ENCODE measurements at regions of chr14 and their contacts with region 1.

Region 1: GRCh38 chr14:84482256-84483066 is 1047.5 kb upstream of the FLRT2 start:
- DNase-seq: peak; percentile 71
- H3K4me3 ChIP-seq: peak overlapping the region in 1 of 3 experiments; percentile 4
- H3K27ac ChIP-seq: peak overlapping the region; percentile 78
- H3K4me1 ChIP-seq: peaks cover 33% of the 10 kb centered on the region
- H3K27me3 ChIP-seq: no peaks in the 10 kb centered on the region
- CTCF ChIP-seq: no peak
- POLR2A ChIP-seq: no peak

Region 2: DNA sequence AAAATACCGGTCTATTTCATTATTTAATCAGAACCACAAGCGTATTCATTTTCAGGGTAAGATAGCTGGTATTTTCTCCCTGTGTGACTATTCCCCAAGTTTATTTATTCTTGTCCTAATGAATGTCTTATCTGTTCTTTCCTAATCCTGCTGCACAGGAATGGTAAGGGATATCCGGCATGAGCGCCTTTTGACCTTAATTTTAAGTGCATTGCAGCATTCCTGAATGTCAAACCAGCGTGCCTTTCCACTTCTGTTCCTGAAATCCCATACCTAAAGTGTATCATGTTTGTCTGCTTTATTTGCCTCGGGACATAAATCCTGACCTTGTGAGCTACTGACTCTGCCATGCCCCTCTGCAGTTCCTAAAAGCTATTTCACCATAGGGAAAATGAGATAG is 665.7 kb before region 1 on chr14:
- CTCF ChIA-PET with region 1: no interaction called
- POLR2A ChIA-PET with region 1: no interaction called
- dilution Hi-C with region 1: no loop called
- intact Hi-C with region 1: loop called (anchors 5 kb)
- DNase-seq: peak; percentile 87
- H3K4me3 ChIP-seq: peak overlapping the region in 1 of 3 experiments; percentile 35
- H3K27ac ChIP-seq: peak overlapping the region; percentile 37
- H3K4me1 ChIP-seq: peaks cover 21% of the 10 kb centered on the region
- H3K27me3 ChIP-seq: no peaks in the 10 kb centered on the region
- CTCF ChIP-seq: no peak
- POLR2A ChIP-seq: peak; percentile 57

Region 3: GRCh38 chr14:84144166-84144565 is 338.3 kb before region 1 on chr14:
- CTCF ChIA-PET with region 1: no interaction called
- POLR2A ChIA-PET with region 1: no interaction called
- dilution Hi-C with region 1: no loop called
- intact Hi-C with region 1: loop called (anchors 1 kb)
- DNase-seq: peak; percentile 58
- H3K4me3 ChIP-seq: no peak overlapping the region
- H3K27ac ChIP-seq: no peak overlapping the region
- H3K4me1 ChIP-seq: peaks cover 9% of the 10 kb centered on the region
- H3K27me3 ChIP-seq: no peaks in the 10 kb centered on the region
- CTCF ChIP-seq: no peak
- POLR2A ChIP-seq: no peak

Region 4: DNA sequence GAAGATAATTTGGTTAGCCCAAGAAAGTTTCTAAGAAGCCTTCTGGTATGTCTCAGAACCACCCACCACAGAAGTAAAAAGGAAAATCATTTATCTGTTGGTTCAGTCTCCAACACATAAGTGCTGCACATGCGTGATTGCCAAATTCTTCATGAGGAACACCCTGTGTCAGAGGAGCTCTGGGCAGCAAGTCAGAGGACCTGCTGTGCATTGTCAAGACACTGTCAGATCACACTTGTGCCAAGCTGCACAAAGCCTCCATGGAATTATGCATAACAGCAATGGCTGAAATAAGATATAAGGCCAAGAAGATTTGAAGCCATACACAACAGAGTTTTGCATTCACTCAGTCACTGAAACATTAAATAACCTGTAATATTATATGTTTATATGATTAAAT is 257.2 kb before region 1 on chr14:
- CTCF ChIA-PET with region 1: no interaction called
- POLR2A ChIA-PET with region 1: interaction called, 11 read pairs
- dilution Hi-C with region 1: no loop called
- intact Hi-C with region 1: no loop called
- DNase-seq: no peak
- H3K4me3 ChIP-seq: no peak overlapping the region
- H3K27ac ChIP-seq: no peak overlapping the region
- H3K4me1 ChIP-seq: peaks cover 9% of the 10 kb centered on the region
- H3K27me3 ChIP-seq: no peaks in the 10 kb centered on the region
- CTCF ChIP-seq: no peak
- POLR2A ChIP-seq: no peak

Region 5: GRCh38 chr14:85415015-85415712 is 932.7 kb after region 1 on chr14:
- CTCF ChIA-PET with region 1: no interaction called
- POLR2A ChIA-PET with region 1: no interaction called
- dilution Hi-C with region 1: no loop called
- intact Hi-C with region 1: loop called (anchors 5 kb)
- DNase-seq: peak; percentile 67
- H3K4me3 ChIP-seq: no peak overlapping the region
- H3K27ac ChIP-seq: peak overlapping the region; percentile 79
- H3K4me1 ChIP-seq: peaks cover 38% of the 10 kb centered on the region
- H3K27me3 ChIP-seq: no peaks in the 10 kb centered on the region
- CTCF ChIP-seq: peak in 1 of 2 donors; percentile 28
- POLR2A ChIP-seq: no peak

Measured in endothelial cell of umbilical vein (primary cell).